ENCODE measurements at regions of chr1 and their contacts with region 1.

Region 1: DNA sequence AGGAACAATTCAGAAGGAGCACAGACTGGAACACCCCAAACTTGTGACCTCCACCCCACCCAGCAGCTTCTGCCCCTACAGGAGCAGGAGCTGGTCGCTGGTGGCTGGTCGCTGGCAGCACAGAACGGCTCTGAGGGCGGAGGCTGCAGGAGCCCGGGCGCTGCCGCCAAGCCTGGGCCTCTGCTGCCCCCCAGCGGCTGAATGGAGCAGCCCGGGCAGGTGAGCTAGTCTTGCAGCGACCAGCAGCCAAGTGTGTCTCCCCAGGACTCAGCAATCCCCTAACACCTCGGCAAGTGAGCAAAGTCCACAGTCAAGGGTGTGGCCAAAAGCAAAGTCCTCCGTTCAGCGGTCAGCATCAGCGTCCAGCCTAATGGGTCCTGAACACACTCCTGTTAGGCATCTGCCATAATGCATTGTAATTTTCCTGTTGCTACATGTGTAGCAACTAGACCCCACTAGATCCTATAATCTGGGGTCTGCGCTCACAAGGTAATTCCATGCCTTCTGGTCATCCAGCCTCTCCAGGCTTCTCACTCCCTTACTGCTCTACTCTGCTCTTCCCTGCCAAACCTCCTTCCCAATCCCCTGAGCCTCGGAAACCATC is 12.1 kb upstream of the GJB5 start:
- DNase-seq: peak; percentile 77
- H3K4me3 Mint-ChIP-seq: no peak overlapping the region
- H3K27ac Mint-ChIP-seq: peak overlapping the region; percentile 20
- H3K4me1 Mint-ChIP-seq: no peaks in the 10 kb centered on the region
- H3K27me3 Mint-ChIP-seq: no peaks in the 10 kb centered on the region
- CTCF ChIP-seq: peak; percentile 97

Region 2: DNA sequence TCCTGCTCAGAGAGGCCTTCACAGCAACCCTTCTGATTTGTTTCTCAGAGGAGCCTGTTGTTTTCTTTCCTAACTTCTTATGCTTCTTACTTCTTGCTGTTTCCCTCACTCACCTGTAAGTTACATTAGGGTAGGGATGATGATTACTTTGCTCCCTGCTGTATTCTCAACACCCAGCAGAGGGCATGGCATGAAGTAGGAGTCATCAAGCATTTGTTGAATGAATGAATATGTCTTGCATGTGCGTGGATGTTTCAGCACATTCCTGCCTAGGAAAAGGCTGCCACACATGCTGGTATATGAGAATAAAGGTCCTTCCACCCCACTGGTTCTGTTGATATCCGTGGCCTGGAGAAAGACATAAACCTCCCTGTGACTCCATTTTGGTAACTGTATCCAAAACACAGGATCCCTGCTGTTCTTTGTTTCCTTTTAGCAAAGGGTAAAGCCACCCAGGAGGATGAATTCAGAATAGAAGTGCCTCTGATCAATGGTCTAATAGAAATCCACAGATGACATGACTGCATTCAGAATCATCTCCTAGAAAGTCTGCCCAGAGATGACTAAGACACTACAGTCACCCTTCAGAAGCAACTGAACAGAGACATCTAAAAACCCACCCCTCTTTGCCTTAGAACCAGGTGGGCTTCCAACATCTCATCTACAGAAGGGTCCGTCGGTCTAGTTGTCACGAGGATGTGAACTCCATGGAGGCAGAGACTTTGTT is 1101.5 kb before region 1 on chr1:
- CTCF ChIA-PET with region 1: interaction called, 17 read pairs
- POLR2A ChIA-PET with region 1: no interaction called
- intact Hi-C with region 1: no loop called
- DNase-seq: peak; percentile 45
- H3K4me3 Mint-ChIP-seq: no peak overlapping the region
- H3K27ac Mint-ChIP-seq: no peak overlapping the region
- H3K4me1 Mint-ChIP-seq: no peaks in the 10 kb centered on the region
- H3K27me3 Mint-ChIP-seq: peaks cover 54% of the 10 kb centered on the region
- CTCF ChIP-seq: peak; percentile 43

Region 3: DNA sequence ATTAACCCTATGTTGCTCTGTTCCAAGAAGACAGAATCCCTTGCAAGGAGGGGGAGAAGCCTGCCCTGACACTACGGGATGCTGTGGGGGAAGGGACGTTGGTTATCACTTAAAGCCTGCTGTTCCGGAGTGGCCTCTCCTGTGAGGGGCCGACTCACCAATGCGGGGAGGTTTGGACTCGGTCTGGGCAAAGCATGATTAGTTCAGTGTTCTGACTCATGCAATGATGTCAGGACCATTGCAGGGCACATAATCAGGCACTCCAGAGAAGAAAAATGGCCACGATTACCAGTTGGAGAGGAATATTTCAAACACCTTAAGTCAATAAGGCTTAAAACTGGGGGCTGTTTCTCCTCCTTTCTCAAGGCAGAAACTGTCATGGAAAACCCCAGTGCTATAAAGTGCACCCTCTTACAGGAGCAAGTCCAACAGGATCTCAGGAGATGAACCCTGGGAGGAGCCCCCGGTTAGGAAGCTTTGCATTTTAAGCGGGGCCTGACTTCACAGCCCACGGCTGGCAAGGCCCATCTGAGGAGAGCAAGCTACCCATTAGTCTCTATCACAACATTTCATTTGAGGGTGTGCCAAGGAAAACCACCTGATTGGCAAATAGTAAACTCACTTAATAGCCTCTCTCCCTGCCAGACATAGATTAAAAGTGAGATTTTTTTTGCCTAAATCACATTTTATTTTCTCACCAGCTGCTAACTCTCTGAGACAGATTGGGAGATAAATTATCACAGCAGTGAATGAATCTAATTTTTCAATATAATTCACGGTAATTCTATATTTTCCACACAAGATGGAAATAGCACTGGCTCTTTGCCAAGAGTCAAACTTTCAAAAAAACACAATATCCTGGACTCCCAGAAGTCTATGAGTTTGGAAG is 363.6 kb before region 1 on chr1:
- CTCF ChIA-PET with region 1: no interaction called
- POLR2A ChIA-PET with region 1: no interaction called
- intact Hi-C with region 1: no loop called
- DNase-seq: no peak
- H3K4me3 Mint-ChIP-seq: no peak overlapping the region
- H3K27ac Mint-ChIP-seq: no peak overlapping the region
- H3K4me1 Mint-ChIP-seq: no peaks in the 10 kb centered on the region
- H3K27me3 Mint-ChIP-seq: no peaks in the 10 kb centered on the region
- CTCF ChIP-seq: no peak

Region 4: DNA sequence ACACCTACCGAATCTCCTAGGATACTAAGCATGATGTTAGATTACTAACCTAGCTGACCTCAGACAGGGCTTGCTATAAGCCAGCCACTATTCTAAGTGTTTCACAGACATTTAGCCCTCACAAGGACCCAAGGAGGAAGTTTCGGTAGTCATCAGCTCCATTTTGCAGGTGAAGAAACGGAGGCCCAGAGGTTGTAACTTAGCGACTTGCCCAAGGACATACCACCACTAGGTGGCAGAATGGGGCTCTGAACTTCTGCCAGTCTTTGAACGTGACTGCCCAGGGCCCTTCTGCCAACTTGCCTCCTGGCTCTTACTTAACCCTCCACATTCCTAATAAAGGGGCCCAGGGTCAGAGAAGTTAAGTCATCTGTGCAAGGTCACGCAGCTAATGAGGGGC is 282.6 kb before region 1 on chr1:
- CTCF ChIA-PET with region 1: interaction called, 53 read pairs
- POLR2A ChIA-PET with region 1: interaction called, 3 read pairs
- intact Hi-C with region 1: no loop called
- DNase-seq: peak; percentile 59
- H3K4me3 Mint-ChIP-seq: no peak overlapping the region
- H3K27ac Mint-ChIP-seq: no peak overlapping the region
- H3K4me1 Mint-ChIP-seq: no peaks in the 10 kb centered on the region
- H3K27me3 Mint-ChIP-seq: no peaks in the 10 kb centered on the region
- CTCF ChIP-seq: peak; percentile 38

Region 5: GRCh38 chr1:34681480-34682451 is 61.0 kb before region 1 on chr1:
- CTCF ChIA-PET with region 1: interaction called, 14 read pairs
- POLR2A ChIA-PET with region 1: no interaction called
- intact Hi-C with region 1: no loop called
- DNase-seq: peak; percentile 73
- H3K4me3 Mint-ChIP-seq: no peak overlapping the region
- H3K27ac Mint-ChIP-seq: no peak overlapping the region
- H3K4me1 Mint-ChIP-seq: no peaks in the 10 kb centered on the region
- H3K27me3 Mint-ChIP-seq: peaks cover 43% of the 10 kb centered on the region
- CTCF ChIP-seq: peak; percentile 69

Region 6: GRCh38 chr1:34709547-34709946 is 33.2 kb before region 1 on chr1:
- CTCF ChIA-PET with region 1: interaction called, 15 read pairs
- POLR2A ChIA-PET with region 1: no interaction called
- intact Hi-C with region 1: no loop called
- DNase-seq: peak; percentile 5
- H3K4me3 Mint-ChIP-seq: no peak overlapping the region
- H3K27ac Mint-ChIP-seq: no peak overlapping the region
- H3K4me1 Mint-ChIP-seq: no peaks in the 10 kb centered on the region
- H3K27me3 Mint-ChIP-seq: peaks cover 47% of the 10 kb centered on the region
- CTCF ChIP-seq: no peak

Region 7: DNA sequence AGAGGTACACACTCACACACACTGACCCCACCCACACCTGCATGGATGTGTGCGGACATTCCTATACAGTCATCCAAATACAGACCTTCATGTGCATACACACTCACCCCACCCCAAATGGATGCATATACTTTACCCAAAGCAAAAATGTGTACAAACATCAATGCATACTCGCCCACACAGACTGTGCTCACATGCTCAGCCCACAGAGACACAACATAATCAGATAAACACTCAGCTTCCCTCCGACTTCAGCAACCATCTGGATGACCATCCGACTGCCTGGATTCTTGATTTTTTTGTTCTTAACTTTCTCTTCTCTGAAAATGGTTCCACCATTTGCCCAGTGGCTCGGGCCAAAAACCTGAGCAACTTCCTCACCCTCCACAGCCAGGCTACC is 12.3 kb before region 1 on chr1:
- CTCF ChIA-PET with region 1: interaction called, 20 read pairs
- POLR2A ChIA-PET with region 1: interaction called, 3 read pairs
- intact Hi-C with region 1: no loop called
- DNase-seq: no peak
- H3K4me3 Mint-ChIP-seq: no peak overlapping the region
- H3K27ac Mint-ChIP-seq: no peak overlapping the region
- H3K4me1 Mint-ChIP-seq: no peaks in the 10 kb centered on the region
- H3K27me3 Mint-ChIP-seq: peaks cover 19% of the 10 kb centered on the region
- CTCF ChIP-seq: no peak

Region 8: DNA sequence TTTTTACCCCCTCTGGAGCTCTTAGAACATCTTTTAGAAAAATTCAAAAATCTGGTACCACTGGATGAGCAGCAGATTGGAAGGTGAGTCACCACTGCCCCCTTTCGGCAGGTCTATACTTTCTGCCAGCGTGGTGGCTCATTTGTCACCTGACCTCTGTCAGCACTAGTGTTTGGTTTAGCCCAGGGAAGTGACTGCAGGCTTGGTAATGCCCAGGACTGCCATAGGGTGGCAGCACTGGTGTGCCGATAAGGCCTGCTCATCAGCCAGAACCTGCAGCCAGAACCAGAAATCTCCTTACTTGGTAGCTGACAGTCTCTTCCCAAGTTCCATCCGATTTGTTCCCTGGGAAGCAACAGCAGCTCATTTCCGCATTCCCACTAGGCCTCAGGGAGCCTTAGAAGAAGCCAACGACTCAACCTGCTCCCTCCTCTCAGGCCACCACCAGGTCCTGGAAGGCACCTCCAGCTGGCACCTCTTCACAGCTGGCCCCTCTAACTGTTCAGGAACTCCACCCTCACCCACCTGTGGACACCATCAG is 110.0 kb after region 1 on chr1:
- CTCF ChIA-PET with region 1: interaction called, 14 read pairs
- POLR2A ChIA-PET with region 1: no interaction called
- intact Hi-C with region 1: no loop called
- DNase-seq: peak; percentile 94
- H3K4me3 Mint-ChIP-seq: no peak overlapping the region
- H3K27ac Mint-ChIP-seq: no peak overlapping the region
- H3K4me1 Mint-ChIP-seq: peaks cover 10% of the 10 kb centered on the region
- H3K27me3 Mint-ChIP-seq: no peaks in the 10 kb centered on the region
- CTCF ChIP-seq: peak; percentile 92

Measured in MCF 10A (cell line).